Caco-2 (cell line): ENCODE measurements at regions of chr10 and their contacts with region 1.

Region 1: DNA sequence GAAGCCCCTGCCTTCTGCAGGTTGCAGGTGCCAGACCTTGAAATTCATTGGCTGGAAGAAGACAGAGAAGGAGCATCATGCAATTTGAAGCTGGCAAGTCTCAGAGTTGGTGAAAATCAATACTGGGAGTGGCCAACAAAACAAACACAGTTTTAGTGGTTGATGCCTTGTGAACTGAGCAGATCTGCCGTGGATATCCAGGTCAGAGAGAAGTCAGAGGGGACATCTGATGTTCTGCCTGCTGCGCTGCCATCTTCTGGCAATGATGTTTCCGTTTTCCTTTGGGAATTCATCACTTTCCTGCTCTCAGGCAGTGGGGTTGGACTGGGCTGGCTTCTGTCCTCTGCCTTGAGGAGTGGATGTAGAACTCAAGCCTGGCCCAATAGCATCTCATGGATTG is 132.0 kb downstream of the RPS24 start:
- DNase-seq: peak in 1 of 2 experiments; percentile 28
- H3K4me3 ChIP-seq: no peak overlapping the region
- H3K4me3 Mint-ChIP-seq: no peak overlapping the region
- H3K27ac Mint-ChIP-seq: no peak overlapping the region
- H3K4me1 ChIP-seq: no peaks in the 10 kb centered on the region
- H3K4me1 Mint-ChIP-seq: no peaks in the 10 kb centered on the region
- H3K27me3 ChIP-seq: no peaks in the 10 kb centered on the region
- H3K27me3 Mint-ChIP-seq: peaks cover 8% of the 10 kb centered on the region
- CTCF ChIP-seq: no peak

Region 2: DNA sequence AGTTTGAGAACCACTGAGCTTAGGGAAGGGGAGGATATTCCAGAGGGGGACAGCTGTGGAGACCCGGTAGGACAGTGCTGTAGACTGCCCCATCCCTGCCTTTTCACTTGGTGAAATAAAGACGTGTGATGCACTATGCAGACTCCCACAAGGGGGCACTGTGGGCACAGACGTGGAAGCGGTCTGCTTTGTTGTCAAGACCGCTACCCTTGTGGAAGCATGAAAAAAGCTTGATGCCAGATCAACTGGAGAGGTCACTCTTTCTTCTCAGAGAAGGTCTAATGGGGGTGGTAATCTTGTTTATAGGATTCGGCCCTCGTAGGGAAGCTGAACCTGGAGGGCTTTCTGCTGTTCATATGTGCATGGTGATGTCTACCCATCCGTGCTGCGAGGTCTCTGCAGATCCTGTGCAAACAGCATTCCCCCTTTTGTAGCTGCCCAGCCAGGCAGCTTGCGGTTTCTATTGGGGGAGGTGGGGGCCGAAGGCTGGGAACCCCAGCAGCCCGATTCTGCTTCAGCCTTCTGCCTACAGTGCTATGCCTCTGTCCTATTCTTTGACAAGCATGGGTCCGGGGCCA is 118.2 kb before region 1 on chr10:
- CTCF ChIA-PET with region 1: interaction called, 7 read pairs
- POLR2A ChIA-PET with region 1: no interaction called
- intact Hi-C with region 1: loop called (anchors 1 kb)
- DNase-seq: peak; percentile 83 to 92
- H3K4me3 ChIP-seq: no peak overlapping the region
- H3K4me3 Mint-ChIP-seq: no peak overlapping the region
- H3K27ac Mint-ChIP-seq: no peak overlapping the region
- H3K4me1 ChIP-seq: no peaks in the 10 kb centered on the region
- H3K4me1 Mint-ChIP-seq: no peaks in the 10 kb centered on the region
- H3K27me3 ChIP-seq: no peaks in the 10 kb centered on the region
- H3K27me3 Mint-ChIP-seq: no peaks in the 10 kb centered on the region
- CTCF ChIP-seq: peak; percentile 91 to 94

Region 3: DNA sequence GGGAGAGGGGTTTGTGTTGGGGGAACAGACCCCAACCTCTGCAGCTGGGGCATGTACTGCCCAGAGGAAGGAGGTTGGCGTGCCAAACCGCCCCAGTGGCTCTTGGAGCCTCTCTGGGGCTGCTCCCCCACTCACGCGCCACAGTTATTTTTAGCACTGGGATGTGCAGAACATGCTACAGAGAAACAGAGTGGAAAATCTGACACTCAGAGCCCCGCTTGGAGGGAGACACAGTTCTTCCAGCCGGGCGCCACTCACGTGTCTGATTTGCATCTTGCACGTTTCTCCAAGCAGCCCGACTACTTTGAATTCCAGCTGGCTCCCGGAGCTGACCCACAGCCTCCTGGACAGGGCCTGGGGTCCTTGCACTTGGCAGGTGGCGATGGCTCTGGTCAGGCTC is 50.0 kb after region 1 on chr10:
- CTCF ChIA-PET with region 1: no interaction called
- POLR2A ChIA-PET with region 1: no interaction called
- intact Hi-C with region 1: no loop called
- DNase-seq: no peak
- H3K4me3 ChIP-seq: no peak overlapping the region
- H3K4me3 Mint-ChIP-seq: no peak overlapping the region
- H3K27ac Mint-ChIP-seq: no peak overlapping the region
- H3K4me1 ChIP-seq: 0 out of 2 replicates have a peak, but pooled peaks cover 10% of the 10 kb centered on the region
- H3K4me1 Mint-ChIP-seq: peaks cover 10% of the 10 kb centered on the region
- H3K27me3 ChIP-seq: no peaks in the 10 kb centered on the region
- H3K27me3 Mint-ChIP-seq: no peaks in the 10 kb centered on the region
- CTCF ChIP-seq: no peak